PC-9 (cell line): ENCODE measurements at regions of chr10 and their contacts with region 1.

Region 1: DNA sequence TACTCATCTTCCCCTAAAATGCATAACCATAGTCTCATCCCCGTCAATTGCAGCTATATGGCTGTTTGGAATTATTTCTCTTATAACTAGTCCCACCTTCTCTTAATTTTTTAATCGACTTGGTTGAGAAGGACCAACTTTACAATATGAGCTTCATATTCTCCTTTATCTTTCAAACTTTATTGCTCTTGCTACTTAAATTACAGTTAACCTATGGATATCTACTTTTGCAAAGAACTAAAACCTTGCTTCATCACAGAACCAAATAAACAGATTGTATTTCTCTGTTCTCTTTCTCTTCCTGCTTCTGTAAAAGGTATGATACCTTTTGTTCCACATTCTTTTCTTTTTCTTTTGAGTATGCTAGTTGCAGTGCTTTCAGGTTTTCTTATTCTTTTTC is 6.1 kb downstream of the CREM start:
- DNase-seq: no peak
- H3K4me3 ChIP-seq: no peak overlapping the region
- H3K27ac ChIP-seq: no peak overlapping the region
- H3K4me1 ChIP-seq: peaks cover 16% of the 10 kb centered on the region
- H3K27me3 ChIP-seq: no peaks in the 10 kb centered on the region
- CTCF ChIP-seq: no peak

Region 2: GRCh38 chr10:35184527-35185171 is 51.9 kb after region 1 on chr10:
- CTCF ChIA-PET with region 1: no interaction called
- POLR2A ChIA-PET with region 1: no interaction called
- intact Hi-C with region 1: no loop called
- DNase-seq: no peak
- H3K4me3 ChIP-seq: no peak overlapping the region
- H3K27ac ChIP-seq: no peak overlapping the region
- H3K4me1 ChIP-seq: no peaks in the 10 kb centered on the region
- H3K27me3 ChIP-seq: no peaks in the 10 kb centered on the region
- CTCF ChIP-seq: no peak

Region 3: DNA sequence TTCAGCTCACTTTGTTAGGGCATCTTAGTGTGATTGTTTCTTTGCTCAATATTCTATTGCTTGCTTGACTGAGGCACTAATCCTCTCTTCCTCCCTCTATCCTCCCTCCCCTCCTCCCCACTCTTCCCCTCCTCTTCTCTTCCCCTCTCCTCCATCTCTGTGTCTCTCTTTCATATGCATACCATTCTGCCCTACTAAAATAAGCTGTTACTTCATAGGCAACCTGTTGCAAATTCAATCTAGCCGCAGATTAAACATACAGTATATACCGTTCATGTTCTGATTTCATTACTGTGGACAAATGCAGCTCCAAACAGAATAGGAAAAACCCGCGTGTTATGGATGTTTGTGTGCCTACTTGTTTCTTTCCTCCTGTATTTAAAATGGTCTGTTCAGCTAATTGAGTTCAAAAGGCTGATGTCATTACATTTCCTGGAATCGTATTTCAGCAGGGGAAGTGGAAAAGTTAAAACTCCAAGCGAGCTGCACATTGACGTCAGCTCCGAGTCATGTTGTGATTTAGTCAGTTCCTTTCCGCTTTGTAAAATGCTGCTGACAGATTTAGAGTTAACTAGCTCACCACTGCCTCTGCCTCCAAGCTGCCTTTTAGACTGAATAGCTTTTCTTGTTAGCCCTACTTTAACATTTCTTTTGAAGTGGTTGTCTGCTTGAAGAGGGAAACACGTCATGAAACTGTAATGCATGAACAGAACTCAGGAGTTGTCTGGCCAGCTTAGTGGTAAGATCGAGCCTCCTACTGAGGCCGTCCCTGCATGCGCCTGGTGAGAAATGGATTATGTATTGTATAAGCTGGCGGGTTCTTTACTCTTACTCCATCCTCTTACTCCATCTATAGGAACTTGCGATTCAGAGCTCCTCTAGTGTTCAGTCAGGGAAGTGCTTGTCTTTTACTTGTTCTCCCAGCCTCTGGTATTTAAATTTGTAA is 62.9 kb after region 1 on chr10:
- CTCF ChIA-PET with region 1: interaction called, 4 read pairs
- POLR2A ChIA-PET with region 1: interaction called, 22 read pairs
- intact Hi-C with region 1: loop called (anchors 2 kb)
- DNase-seq: peak; percentile 50 to 73
- H3K4me3 ChIP-seq: peak overlapping the region; percentile 50; the same call in 1 of the 2 replicates
- H3K27ac ChIP-seq: peak overlapping the region; percentile 61
- H3K4me1 ChIP-seq: peaks cover 12% of the 10 kb centered on the region; the same call in 1 of the 2 replicates
- H3K27me3 ChIP-seq: no peaks in the 10 kb centered on the region
- CTCF ChIP-seq: peak; percentile 85